ENCODE measurements at regions of chr6 and their contacts with region 1.

Region 1: DNA sequence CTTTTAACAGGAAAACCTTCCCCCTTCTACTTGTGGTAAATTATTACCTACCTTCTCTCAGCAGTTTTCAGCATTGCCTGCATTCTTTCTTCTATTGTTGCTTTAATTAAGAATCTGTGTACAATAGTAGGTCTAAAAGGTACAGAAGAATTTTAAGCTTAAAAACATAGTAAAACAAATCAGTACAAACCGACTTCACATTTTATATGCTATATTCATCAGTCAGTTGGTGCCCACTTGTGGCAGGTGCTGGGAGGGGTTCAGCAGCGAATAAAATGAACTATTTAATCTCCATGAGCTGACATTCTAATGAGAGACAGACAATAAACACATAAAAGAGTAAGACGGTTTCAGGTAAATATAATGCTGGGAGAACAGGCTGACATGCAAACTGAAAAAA is 73.4 kb upstream of the FBXO30 start:
- DNase-seq: peak; percentile 44
- ATAC-seq: peak; percentile 43
- H3K4me3 ChIP-seq: no peak overlapping the region
- H3K4me3 Mint-ChIP-seq: no peak overlapping the region
- H3K27ac ChIP-seq: no peak overlapping the region
- H3K27ac Mint-ChIP-seq: no peak overlapping the region
- H3K4me1 ChIP-seq: no peaks in the 10 kb centered on the region
- H3K4me1 Mint-ChIP-seq: no peaks in the 10 kb centered on the region
- H3K27me3 ChIP-seq: no peaks in the 10 kb centered on the region
- H3K27me3 Mint-ChIP-seq: no peaks in the 10 kb centered on the region
- CTCF ChIP-seq: peak; percentile 68

Region 2: GRCh38 chr6:145633981-145634627 is 253.9 kb before region 1 on chr6:
- CTCF ChIA-PET with region 1: interaction called, 5 read pairs
- POLR2A ChIA-PET with region 1: no interaction called
- intact Hi-C with region 1: loop called (anchors 5 kb)
- DNase-seq: peak; percentile 73
- ATAC-seq: peak; percentile 69
- H3K4me3 ChIP-seq: no peak overlapping the region
- H3K4me3 Mint-ChIP-seq: no peak overlapping the region
- H3K27ac ChIP-seq: no peak overlapping the region
- H3K27ac Mint-ChIP-seq: no peak overlapping the region
- H3K4me1 ChIP-seq: peaks cover 0 to 3% of the 10 kb centered on the region in 2 donors
- H3K4me1 Mint-ChIP-seq: peaks cover 8% of the 10 kb centered on the region
- H3K27me3 ChIP-seq: no peaks in the 10 kb centered on the region
- H3K27me3 Mint-ChIP-seq: no peaks in the 10 kb centered on the region
- CTCF ChIP-seq: peak; percentile 98

Region 3: DNA sequence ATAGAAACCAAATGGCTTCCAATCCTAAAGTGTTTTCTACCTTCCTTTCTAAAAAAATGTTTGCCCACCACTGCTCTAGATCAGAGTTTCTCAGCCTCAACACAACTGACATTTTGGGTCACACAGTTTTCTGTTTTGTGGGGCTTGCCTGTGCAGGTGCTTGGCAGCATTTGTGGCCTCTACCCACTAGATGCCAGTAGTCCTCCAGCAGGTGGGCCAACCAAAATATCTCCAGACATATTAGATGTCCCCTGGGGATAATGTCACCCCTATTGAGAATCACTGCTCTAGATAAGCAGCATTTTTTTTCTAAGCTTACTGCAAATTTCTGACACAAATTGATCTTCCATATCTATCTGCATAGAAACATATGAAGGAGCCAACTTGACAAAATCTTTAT is 126.4 kb before region 1 on chr6:
- CTCF ChIA-PET with region 1: interaction called, 5 read pairs
- POLR2A ChIA-PET with region 1: no interaction called
- intact Hi-C with region 1: loop called (anchors 5 kb)
- DNase-seq: peak; percentile 31
- ATAC-seq: peak; percentile 36
- H3K4me3 ChIP-seq: no peak overlapping the region
- H3K4me3 Mint-ChIP-seq: no peak overlapping the region
- H3K27ac ChIP-seq: no peak overlapping the region
- H3K27ac Mint-ChIP-seq: no peak overlapping the region
- H3K4me1 ChIP-seq: no peaks in the 10 kb centered on the region
- H3K4me1 Mint-ChIP-seq: no peaks in the 10 kb centered on the region
- H3K27me3 ChIP-seq: no peaks in the 10 kb centered on the region
- H3K27me3 Mint-ChIP-seq: no peaks in the 10 kb centered on the region
- CTCF ChIP-seq: no peak

Measured in B cell (primary cell).